ENCODE measurements at regions of chr19 and their contacts with region 1.

Region 1: GRCh38 chr19:19865739-19866481 is at the start of gene ZNF253:
- DNase-seq: peak; percentile 94 to 96
- ATAC-seq: peak; percentile 88 to 97 (median 89)
- H3K4me3 ChIP-seq: peak within 1 kb of the TSS; percentile 95
- H3K4me3 Mint-ChIP-seq: peak within 1 kb of the TSS; percentile 99
- H3K27ac ChIP-seq: peak within 1 kb of the TSS; percentile 91
- H3K27ac Mint-ChIP-seq: peak within 1 kb of the TSS; percentile 97 to 98
- H3K4me1 ChIP-seq: peaks cover 16% of the 10 kb centered on the region
- H3K4me1 Mint-ChIP-seq: peaks cover 43 to 51% of the 10 kb centered on the region in 2 donors
- H3K27me3 ChIP-seq: no peaks in the 10 kb centered on the region
- H3K27me3 Mint-ChIP-seq: peaks cover 0 to 3% of the 10 kb centered on the region in 2 donors
- CTCF ChIP-seq: no peak
- total RNA-seq, gene ZNF253: 8.6 to 14.7 (median 10.1) TPM

Region 2: GRCh38 chr19:19668230-19669012 is 197.5 kb before region 1 on chr19 and contains the start of gene ZNF101:
- intact Hi-C with region 1: loop called (anchors 1 kb)
- DNase-seq: peak; percentile 91 to 97
- ATAC-seq: peak; percentile 66 to 81 (median 69)
- H3K4me3 ChIP-seq: peak within 1 kb of the TSS; percentile 97
- H3K4me3 Mint-ChIP-seq: peak within 1 kb of the TSS; percentile 97
- H3K27ac ChIP-seq: peak within 1 kb of the TSS; percentile 95
- H3K27ac Mint-ChIP-seq: peak within 1 kb of the TSS; percentile 95 to 97
- H3K4me1 ChIP-seq: peaks cover 63% of the 10 kb centered on the region
- H3K4me1 Mint-ChIP-seq: peaks cover 20 to 30% of the 10 kb centered on the region in 2 donors
- H3K27me3 ChIP-seq: no peaks in the 10 kb centered on the region
- H3K27me3 Mint-ChIP-seq: no peaks in the 10 kb centered on the region
- CTCF ChIP-seq: no peak
- total RNA-seq, gene ZNF101: 35.7 to 58.7 (median 41.0) TPM

Region 3: GRCh38 chr19:19776041-19777008 is 89.6 kb before region 1 on chr19:
- intact Hi-C with region 1: loop called (anchors 1 kb)
- DNase-seq: peak; percentile 86 to 95
- ATAC-seq: peak; percentile 99 to 100 (median 99)
- H3K4me3 ChIP-seq: peak overlapping the region; percentile 53
- H3K4me3 Mint-ChIP-seq: peak overlapping the region; percentile 93
- H3K27ac ChIP-seq: peak overlapping the region; percentile 58
- H3K27ac Mint-ChIP-seq: peak overlapping the region; percentile 89 to 94
- H3K4me1 ChIP-seq: peaks cover 15% of the 10 kb centered on the region
- H3K4me1 Mint-ChIP-seq: peaks cover 20 to 35% of the 10 kb centered on the region in 2 donors
- H3K27me3 ChIP-seq: no peaks in the 10 kb centered on the region
- H3K27me3 Mint-ChIP-seq: no peaks in the 10 kb centered on the region
- CTCF ChIP-seq: no peak

Region 4: DNA sequence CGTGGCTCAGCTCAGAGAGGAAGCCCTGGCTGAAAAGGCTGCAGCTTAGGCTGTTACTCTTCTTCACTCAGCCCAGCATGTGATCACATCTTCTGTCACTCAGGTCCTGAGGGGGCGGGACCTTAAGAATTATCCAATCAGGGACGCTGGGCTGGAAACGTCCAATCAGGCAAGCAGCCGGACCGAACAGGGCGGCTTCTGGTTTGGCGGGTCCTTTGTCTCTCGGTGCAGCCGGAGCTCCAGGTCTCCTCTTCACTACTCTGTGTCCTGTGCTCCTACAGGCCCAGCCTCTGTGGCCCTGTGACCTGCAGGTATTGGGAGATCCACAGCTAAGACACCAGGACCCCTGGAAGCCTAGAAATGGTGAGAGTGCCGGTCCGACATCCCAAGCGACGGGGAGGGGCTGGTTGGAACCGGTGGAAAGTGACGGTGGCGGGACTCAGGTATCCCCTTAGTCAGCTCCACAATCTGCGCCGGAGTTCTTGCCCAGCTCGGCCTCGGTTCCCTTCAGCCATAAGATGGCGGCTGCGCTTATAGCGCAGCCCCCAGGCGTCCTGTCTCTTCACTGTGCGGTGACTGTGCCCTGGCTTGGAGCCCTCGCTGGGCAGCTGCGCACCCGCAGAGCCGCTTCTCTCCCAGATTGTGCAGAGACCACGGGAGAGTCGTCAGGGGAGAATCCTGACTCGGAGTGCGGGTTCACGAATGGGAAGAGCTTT is 35.0 kb after region 1 on chr19 and contains the start of gene ZNF93:
- intact Hi-C with region 1: loop called (anchors 1 kb)
- DNase-seq: peak; percentile 89 to 95
- ATAC-seq: peak; percentile 96 to 99 (median 99)
- H3K4me3 ChIP-seq: peak within 1 kb of the TSS; percentile 88
- H3K4me3 Mint-ChIP-seq: peak within 1 kb of the TSS; percentile 99
- H3K27ac ChIP-seq: peak within 1 kb of the TSS; percentile 73
- H3K27ac Mint-ChIP-seq: peak within 1 kb of the TSS; percentile 92 to 96
- H3K4me1 ChIP-seq: peaks cover 14% of the 10 kb centered on the region
- H3K4me1 Mint-ChIP-seq: peaks cover 20 to 32% of the 10 kb centered on the region in 2 donors
- H3K27me3 ChIP-seq: no peaks in the 10 kb centered on the region
- H3K27me3 Mint-ChIP-seq: no peaks in the 10 kb centered on the region
- CTCF ChIP-seq: no peak
- total RNA-seq, gene ZNF93: 2.2 to 5.2 (median 4.2) TPM

Measured in natural killer cell (primary cell).